Sigmoid colon (tissue), 7 donors: ENCODE measurements at regions of chr10 and their contacts with region 1.

Region 1: DNA sequence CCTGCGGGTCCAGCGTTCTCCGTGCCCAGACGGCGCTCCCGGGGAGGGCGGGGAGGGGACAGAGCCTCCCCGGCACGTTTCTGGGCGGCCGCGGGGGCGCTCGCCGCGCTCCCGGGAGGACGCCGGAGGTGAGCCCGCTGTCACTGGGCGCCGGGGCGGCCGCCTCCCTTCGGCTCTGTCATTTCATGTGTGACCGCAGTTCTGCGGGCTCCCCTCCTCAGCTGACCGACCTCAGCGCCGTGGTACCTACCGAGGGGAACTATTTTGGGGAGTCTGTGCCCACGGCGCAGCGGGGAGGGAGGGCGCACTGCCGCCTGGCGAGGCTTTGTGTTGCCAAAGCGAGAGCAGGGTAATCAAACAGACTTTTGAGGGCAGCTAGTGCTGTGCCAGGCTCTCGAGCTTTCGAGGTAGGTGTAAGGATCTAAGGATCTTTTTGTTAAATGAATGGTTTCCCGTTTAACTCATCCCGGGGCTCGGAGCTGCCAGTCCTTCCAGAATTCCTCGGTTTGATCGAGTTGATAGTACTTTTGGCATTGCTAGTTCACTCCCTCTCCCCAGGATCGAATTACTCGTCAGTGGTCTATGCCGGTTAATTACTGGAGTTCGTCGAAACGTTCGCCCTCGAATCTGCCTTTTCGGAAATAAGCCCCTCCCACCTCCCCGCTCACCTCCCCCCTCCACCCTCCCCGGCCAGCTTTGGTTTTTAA is 1.9 kb downstream of the ARID5B start:
- DNase-seq: peak; percentile 78
- H3K4me3 ChIP-seq: peak overlapping the region; percentile 67 to 75 (median 68)
- H3K27ac ChIP-seq: peak overlapping the region; percentile 93 to 98 (median 96)
- H3K4me1 ChIP-seq: peaks cover 0 to 36% (median 14%) of the 10 kb centered on the region in 4 donors
- H3K27me3 ChIP-seq: no peaks in the 10 kb centered on the region
- CTCF ChIP-seq: no peak
- EP300 ChIP-seq: no peak
- POLR2A ChIP-seq: peak in 1 of 2 donors; percentile 46

Region 2: GRCh38 chr10:61835069-61835945 is 68.1 kb before region 1 on chr10:
- intact Hi-C with region 1: loop called (anchors 5 kb)
- DNase-seq: no peak
- H3K4me3 ChIP-seq: no peak overlapping the region
- H3K27ac ChIP-seq: peak overlapping the region; percentile 43 to 78 (median 74)
- H3K4me1 ChIP-seq: peaks cover 0 to 35% (median 32%) of the 10 kb centered on the region in 4 donors
- H3K27me3 ChIP-seq: no peaks in the 10 kb centered on the region
- CTCF ChIP-seq: peak; percentile 13 to 42 (median 24)
- EP300 ChIP-seq: no peak
- POLR2A ChIP-seq: no peak

Region 3: DNA sequence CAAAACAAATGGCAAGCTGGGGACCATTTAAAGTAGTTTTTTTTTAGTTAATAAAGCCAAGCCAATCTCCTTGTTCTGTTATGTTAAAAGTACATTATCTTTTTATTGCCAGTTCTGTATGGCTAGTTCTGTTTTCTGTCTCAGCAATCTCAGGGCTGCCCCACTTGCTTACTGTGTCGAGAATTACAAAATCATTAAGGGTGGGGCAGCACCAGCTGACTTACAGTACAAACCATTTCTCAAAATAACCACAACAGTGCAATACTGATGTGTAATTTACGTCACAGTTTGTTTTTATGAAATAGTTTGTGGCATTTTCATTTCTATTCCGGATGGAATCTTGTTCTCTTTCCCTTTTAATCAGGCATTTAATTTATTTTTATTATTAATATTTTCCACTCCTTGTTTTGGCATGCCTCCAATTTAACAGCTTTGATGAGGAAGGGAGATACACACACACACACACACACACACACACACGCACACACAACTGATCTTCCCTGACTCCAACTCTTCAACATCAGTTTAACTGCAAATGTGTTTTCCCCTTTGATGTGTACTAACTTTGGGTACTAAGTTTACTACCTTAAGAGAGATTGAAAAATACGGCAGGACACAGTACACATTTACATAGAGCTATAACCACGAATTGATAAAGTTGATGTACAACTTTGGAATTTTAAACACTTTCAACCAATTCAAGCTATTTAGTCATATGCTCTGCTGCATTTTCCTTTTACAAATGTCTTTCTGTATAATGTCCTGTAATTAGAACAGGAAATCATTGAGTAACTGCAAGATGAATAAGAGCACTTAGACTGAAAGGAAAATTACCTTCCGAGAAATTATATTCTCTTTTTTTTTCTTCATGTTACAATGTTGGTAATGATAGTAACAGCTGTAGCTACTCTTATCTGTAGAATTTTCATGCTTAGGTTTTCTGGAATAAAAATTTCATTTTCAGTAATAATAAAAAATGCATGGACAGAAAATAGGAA is 89.6 kb after region 1 on chr10:
- intact Hi-C with region 1: loop called (anchors 2 kb)
- DNase-seq: peak; percentile 86
- H3K4me3 ChIP-seq: peak overlapping the region in 3 of 4 donors; percentile 1 to 14 (median 7)
- H3K27ac ChIP-seq: peak overlapping the region; percentile 60 to 81 (median 78)
- H3K4me1 ChIP-seq: peaks cover 0 to 48% (median 33%) of the 10 kb centered on the region in 4 donors
- H3K27me3 ChIP-seq: no peaks in the 10 kb centered on the region
- CTCF ChIP-seq: no peak
- EP300 ChIP-seq: peak; percentile 51 to 96 (median 88)
- POLR2A ChIP-seq: no peak

Region 4: DNA sequence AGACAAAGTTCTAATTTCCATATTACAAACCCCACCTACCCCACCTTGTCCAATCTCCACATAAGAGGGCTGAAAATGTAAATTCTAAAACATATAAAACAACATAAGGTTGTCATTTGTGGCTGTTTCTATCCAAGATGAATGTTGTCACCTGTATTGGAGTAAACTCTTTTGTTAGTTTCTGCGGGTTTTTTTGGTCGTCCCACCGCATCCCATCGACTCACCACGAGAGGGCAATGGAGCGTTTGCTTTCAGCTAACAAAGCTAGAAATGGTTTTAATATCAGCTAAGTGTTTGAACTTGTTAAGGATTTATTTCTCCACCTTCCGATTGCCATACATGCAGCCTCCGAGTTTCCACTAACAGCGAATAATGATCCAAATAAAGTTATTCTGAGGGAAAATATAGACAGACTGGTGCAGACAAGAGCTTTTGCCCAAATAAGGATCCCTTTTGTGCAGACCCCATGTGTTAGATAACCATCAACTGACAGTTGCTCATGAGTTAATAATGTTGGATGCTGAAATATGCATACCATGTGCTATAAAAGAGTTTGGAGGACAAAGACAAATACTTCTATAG is 135.3 kb after region 1 on chr10:
- intact Hi-C with region 1: loop called (anchors 2 kb)
- DNase-seq: peak; percentile 86
- H3K4me3 ChIP-seq: peak overlapping the region in 3 of 4 donors; percentile 13 to 37 (median 22)
- H3K27ac ChIP-seq: peak overlapping the region; percentile 69 to 95 (median 82)
- H3K4me1 ChIP-seq: peaks cover 0 to 75% (median 60%) of the 10 kb centered on the region in 4 donors
- H3K27me3 ChIP-seq: no peaks in the 10 kb centered on the region
- CTCF ChIP-seq: peak; percentile 79 to 89 (median 86)
- EP300 ChIP-seq: no peak
- POLR2A ChIP-seq: no peak